PC-9 (cell line): ENCODE measurements at regions of chr10 and their contacts with region 1.

Region 1: GRCh38 chr10:51422311-51423120 is 276.9 kb downstream of the CSTF2T start:
- DNase-seq: peak in 1 of 2 experiments; percentile 26
- H3K4me3 ChIP-seq: no peak overlapping the region
- H3K27ac ChIP-seq: no peak overlapping the region
- H3K4me1 ChIP-seq: no peaks in the 10 kb centered on the region
- H3K27me3 ChIP-seq: no peaks in the 10 kb centered on the region
- CTCF ChIP-seq: peak; percentile 81

Region 2: GRCh38 chr10:51063659-51064535 is 358.6 kb before region 1 on chr10:
- CTCF ChIA-PET with region 1: no interaction called
- POLR2A ChIA-PET with region 1: no interaction called
- intact Hi-C with region 1: loop called (anchors 5 kb)
- DNase-seq: no peak
- H3K4me3 ChIP-seq: no peak overlapping the region
- H3K27ac ChIP-seq: no peak overlapping the region
- H3K4me1 ChIP-seq: no peaks in the 10 kb centered on the region
- H3K27me3 ChIP-seq: no peaks in the 10 kb centered on the region
- CTCF ChIP-seq: peak; percentile 79

Region 3: GRCh38 chr10:51358227-51358626 is 64.3 kb before region 1 on chr10:
- CTCF ChIA-PET with region 1: no interaction called
- POLR2A ChIA-PET with region 1: no interaction called
- intact Hi-C with region 1: no loop called
- DNase-seq: no peak
- H3K4me3 ChIP-seq: no peak overlapping the region
- H3K27ac ChIP-seq: no peak overlapping the region
- H3K4me1 ChIP-seq: no peaks in the 10 kb centered on the region
- H3K27me3 ChIP-seq: no peaks in the 10 kb centered on the region
- CTCF ChIP-seq: no peak

Region 4: GRCh38 chr10:51439645-51440044 is 17.1 kb after region 1 on chr10:
- CTCF ChIA-PET with region 1: no interaction called
- POLR2A ChIA-PET with region 1: no interaction called
- intact Hi-C with region 1: loop called (anchors 1 kb)
- DNase-seq: no peak
- H3K4me3 ChIP-seq: no peak overlapping the region
- H3K27ac ChIP-seq: no peak overlapping the region
- H3K4me1 ChIP-seq: no peaks in the 10 kb centered on the region
- H3K27me3 ChIP-seq: no peaks in the 10 kb centered on the region
- CTCF ChIP-seq: no peak

Region 5: DNA sequence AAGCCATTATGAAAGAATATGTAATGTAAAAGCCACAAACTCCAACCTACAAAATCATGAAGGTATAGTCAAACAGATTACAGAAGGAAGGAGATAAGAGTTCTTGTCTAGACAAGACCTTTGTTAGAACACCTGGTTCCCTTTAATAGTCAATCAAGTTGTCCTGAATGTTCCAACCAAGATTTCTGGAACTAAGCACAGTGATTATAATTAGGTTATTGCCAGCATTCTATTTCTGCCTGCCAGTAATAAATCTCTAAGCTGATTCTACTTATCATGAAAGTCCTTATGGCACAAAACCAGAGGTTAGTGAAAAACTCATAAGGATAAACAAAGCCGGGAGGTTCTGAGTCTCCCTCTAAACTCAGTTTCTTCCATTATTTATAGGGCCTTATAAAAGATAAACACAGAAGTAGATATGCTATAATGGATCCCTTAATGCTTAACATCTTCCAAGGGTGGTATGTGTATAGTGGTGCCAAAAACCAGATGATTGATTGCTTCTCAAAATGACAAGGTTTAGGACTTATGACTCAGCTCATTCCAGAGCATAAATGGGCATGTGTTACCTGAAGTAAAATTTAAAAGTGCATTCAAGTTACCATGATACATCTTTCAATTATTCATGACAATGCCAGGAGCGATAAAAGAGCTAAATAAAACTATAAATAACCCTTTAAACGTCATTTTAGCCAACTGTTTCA is 39.7 kb after region 1 on chr10:
- CTCF ChIA-PET with region 1: no interaction called
- POLR2A ChIA-PET with region 1: no interaction called
- intact Hi-C with region 1: no loop called
- DNase-seq: peak in 1 of 2 experiments; percentile 53
- H3K4me3 ChIP-seq: no peak overlapping the region
- H3K27ac ChIP-seq: no peak overlapping the region
- H3K4me1 ChIP-seq: no peaks in the 10 kb centered on the region
- H3K27me3 ChIP-seq: no peaks in the 10 kb centered on the region
- CTCF ChIP-seq: no peak

Region 6: DNA sequence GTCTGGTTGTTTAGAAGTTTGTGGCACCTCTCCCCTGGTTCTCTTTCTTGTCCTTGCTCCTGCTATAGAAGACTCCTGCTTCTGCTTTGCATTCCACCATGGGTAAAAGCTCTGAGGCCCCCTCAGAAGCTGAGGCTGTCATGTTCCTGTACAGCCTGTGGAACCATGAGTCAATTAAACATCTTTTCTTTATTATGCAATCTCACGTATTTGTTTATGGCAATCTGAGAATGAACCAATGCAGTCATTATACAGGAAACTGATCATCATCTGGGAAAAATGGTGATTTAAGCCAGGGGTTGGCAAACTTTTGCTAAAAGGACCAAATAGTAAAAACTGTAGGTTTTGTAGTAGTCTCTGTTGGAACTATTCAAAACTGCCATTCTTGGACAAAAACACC is 101.5 kb after region 1 on chr10:
- CTCF ChIA-PET with region 1: no interaction called
- POLR2A ChIA-PET with region 1: no interaction called
- intact Hi-C with region 1: no loop called
- DNase-seq: no peak
- H3K4me3 ChIP-seq: no peak overlapping the region
- H3K27ac ChIP-seq: no peak overlapping the region
- H3K4me1 ChIP-seq: no peaks in the 10 kb centered on the region
- H3K27me3 ChIP-seq: no peaks in the 10 kb centered on the region
- CTCF ChIP-seq: no peak